Panc1 (cell line): ENCODE measurements at regions of chr5 and their contacts with region 1.

Region 1: DNA sequence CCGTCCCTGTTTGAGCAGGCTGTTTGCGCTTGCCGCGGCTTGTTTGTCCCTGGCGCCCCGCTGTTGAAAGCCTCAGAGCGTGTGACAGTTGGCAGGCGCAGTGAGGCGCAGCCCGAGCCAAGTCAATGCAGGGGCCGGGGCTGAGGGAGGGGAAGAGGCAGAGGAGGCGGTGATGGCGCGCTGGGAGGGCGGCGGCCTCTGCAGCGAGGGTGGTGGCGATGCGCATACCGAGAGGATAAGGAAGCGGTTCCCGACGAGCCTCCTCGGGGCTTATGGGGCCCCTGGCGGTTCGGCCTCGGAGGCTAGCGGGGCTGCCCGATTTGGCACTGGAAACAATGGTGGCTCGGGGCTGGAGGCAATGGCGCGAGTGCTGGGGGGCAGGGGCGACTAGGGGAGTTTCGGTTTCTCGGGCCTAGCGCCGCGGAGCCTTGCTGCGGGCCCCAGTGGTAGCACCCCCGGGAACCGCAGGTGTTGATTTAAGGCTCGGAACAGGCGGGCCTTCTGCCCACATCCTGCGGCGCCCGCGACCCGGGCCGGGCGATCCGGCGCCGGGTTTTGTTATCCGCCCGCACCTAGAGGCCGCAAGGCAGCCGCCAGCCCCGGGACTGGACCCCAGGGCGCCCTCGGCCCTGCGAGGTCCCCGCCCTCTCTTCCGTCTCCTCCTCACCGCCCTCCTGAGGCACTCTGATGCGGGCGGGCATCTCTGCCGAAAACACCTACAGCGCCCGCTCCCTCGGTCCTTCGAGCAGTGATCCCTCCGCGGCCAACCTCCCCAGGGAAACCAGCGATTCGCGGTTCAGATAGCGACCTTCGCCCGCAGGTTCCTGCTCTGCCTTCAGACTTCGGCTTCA is 947 bp upstream of the LNPEP start:
- DNase-seq: peak; percentile 77
- ATAC-seq: peak; percentile 88
- H3K4me3 ChIP-seq: peak overlapping the region; percentile 87 to 94
- H3K27ac ChIP-seq: peak overlapping the region; percentile 97
- H3K4me1 ChIP-seq: peaks cover 35% of the 10 kb centered on the region
- H3K27me3 ChIP-seq: no peaks in the 10 kb centered on the region
- CTCF ChIP-seq: peak; percentile 13; the same call in 1 of the 2 replicates

Region 2: GRCh38 chr5:96807075-96807654 is 127.8 kb before region 1 on chr5:
- CTCF ChIA-PET with region 1: no interaction called
- POLR2A ChIA-PET with region 1: interaction called, 18 read pairs
- in situ Hi-C with region 1: no loop called
- intact Hi-C with region 1: loop called (anchors 5 kb)
- DNase-seq: no peak
- ATAC-seq: peak; percentile 74
- H3K4me3 ChIP-seq: peak overlapping the region; percentile 82 to 85
- H3K27ac ChIP-seq: peak overlapping the region; percentile 97
- H3K4me1 ChIP-seq: peaks cover 19% of the 10 kb centered on the region
- H3K27me3 ChIP-seq: no peaks in the 10 kb centered on the region
- CTCF ChIP-seq: no peak

Region 3: DNA sequence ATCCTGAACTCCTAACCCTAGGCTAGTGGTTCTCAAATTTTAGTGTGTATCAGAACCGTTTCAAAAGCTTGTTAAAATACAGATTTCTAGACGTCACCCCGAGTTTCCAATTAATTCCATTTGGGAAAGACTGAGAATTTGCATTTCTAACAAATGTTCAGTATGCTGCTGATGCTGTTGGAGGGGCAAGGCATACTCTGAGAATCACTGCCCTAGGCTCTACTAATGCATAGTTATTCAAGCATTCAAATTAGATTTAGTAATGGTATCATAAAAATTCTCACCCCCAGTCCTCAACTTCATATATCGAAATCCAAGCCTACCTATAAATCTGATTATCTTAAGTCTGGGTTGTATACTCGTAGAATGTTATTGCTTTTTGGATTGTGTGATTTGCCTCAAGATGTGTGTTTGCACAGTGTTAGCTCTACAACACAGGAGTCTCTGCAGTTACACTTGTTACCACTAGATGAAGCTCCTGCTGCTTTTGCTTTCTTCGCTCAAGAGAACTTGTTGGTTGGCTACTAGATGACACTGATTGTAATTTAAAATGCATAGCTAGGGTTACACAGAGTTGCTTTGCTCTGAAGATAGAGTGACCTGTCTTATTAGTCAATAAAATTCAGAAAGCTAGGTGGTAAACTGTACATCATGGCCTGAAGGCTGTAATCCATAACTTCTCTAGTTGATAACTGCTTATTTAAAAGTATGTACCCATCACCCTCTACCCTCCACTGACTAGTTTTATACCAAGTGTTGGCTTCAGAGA is 66.1 kb before region 1 on chr5:
- CTCF ChIA-PET with region 1: interaction called, 3 read pairs
- POLR2A ChIA-PET with region 1: interaction called, 10 read pairs
- in situ Hi-C with region 1: no loop called
- intact Hi-C with region 1: loop called (anchors 5 kb)
- DNase-seq: peak; percentile 79
- ATAC-seq: peak; percentile 93
- H3K4me3 ChIP-seq: no peak overlapping the region
- H3K27ac ChIP-seq: no peak overlapping the region
- H3K4me1 ChIP-seq: no peaks in the 10 kb centered on the region
- H3K27me3 ChIP-seq: peaks cover 7% of the 10 kb centered on the region; the same call in 1 of the 2 replicates
- CTCF ChIP-seq: peak; percentile 92

Region 4: DNA sequence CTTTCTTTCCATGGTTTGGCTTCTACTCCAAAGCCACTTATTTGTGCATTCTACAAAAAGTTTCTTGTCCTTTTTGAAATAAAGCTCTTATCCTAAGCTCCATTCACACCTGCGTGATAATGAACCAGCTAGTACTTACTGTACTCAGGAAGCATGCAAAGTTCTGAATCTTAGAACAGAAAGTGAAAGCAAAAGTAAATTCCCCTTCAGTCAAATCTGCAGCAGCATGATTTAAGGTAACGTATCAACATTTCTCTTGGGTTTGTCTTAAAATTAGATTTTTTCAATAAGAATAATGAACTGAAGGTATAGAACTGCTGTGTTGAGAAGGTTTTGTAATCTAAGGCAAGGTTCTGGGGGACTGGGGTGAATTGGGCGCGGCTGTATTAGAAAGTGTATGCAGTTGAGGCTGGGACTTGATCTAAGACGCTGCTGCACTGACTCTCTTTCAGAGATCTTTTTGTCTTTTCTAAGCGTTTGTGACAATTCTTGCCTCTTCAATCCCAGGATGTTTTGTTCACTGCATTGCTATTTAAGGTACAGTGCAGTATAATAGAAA is 58.6 kb before region 1 on chr5 and contains the start of gene ERAP2:
- CTCF ChIA-PET with region 1: interaction called, 3 read pairs
- POLR2A ChIA-PET with region 1: interaction called, 10 read pairs
- in situ Hi-C with region 1: no loop called
- intact Hi-C with region 1: loop called (anchors 5 kb)
- DNase-seq: no peak
- ATAC-seq: peak; percentile 73
- H3K4me3 ChIP-seq: peak within 1 kb of the TSS; percentile 61 to 71
- H3K27ac ChIP-seq: peak within 1 kb of the TSS; percentile 97
- H3K4me1 ChIP-seq: peaks cover 9% of the 10 kb centered on the region; the same call in 1 of the 2 replicates
- H3K27me3 ChIP-seq: no peaks in the 10 kb centered on the region
- CTCF ChIP-seq: no peak
- total RNA-seq, gene ERAP2: 15.5 TPM